ENCODE measurements at regions of chr3 and their contacts with region 1.

Region 1: DNA sequence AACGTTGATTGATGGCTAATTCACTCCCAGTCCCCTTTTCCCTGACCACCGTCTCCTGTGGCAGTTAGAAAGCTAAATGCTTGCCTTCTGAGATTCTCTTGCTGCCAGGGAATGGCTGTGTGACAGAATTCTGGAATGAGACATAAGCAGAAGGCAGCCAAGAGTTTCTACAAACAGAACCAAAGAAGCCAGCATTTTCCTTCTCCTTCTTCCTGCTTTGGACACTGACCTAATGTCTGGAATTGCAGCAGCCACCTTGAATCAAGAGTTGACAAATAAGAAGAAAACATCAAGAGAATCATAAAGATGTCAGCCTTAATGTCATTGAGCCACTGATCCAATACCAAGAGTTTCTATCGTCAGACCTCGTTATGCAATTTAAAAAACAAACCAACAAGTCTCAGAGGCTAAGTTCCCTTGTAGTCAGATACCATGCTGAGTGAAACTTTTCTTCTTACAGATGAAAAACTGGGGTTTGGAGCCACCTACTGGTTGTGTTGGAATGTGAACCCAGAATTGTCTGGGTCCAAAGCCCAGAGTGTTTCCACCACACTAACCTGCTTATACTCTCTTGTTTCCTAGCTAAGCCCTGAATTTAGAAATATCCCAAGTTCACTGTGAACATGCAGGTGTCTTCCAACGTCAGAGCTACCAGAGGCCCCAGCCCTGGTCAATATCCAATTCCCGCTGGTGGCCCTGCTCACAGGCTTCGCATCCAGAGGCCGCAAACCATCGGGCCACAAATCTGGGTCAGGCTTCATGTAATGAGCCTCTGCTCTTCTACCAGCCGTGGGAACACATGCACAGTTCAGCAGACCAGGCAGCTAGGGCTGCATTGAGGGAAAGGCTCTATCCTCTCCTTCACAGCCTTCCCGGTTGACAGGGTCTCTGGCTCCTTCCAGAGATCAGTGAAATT is 42.5 kb downstream of the MCF2L2 start:
- DNase-seq: peak; percentile 48
- ATAC-seq: peak; percentile 66
- H3K4me3 Mint-ChIP-seq: no peak overlapping the region
- H3K27ac Mint-ChIP-seq: peak overlapping the region; percentile 88; the same call in 1 of the 2 replicates
- H3K4me1 Mint-ChIP-seq: peaks cover 34% of the 10 kb centered on the region
- H3K27me3 Mint-ChIP-seq: no peaks in the 10 kb centered on the region
- CTCF ChIP-seq: peak; percentile 67

Region 2: GRCh38 chr3:183085634-183086390 is 300.1 kb before region 1 on chr3:
- CTCF ChIA-PET with region 1: interaction called, 10 read pairs
- POLR2A ChIA-PET with region 1: no interaction called
- DNase-seq: peak; percentile 73
- ATAC-seq: peak; percentile 93
- H3K4me3 Mint-ChIP-seq: no peak overlapping the region
- H3K27ac Mint-ChIP-seq: peak overlapping the region; percentile 90
- H3K4me1 Mint-ChIP-seq: 0 out of 2 replicates have a peak, but pooled peaks cover 8% of the 10 kb centered on the region
- H3K27me3 Mint-ChIP-seq: no peaks in the 10 kb centered on the region
- CTCF ChIP-seq: peak; percentile 70

Region 3: GRCh38 chr3:183122257-183122932 is 263.6 kb before region 1 on chr3:
- CTCF ChIA-PET with region 1: interaction called, 20 read pairs
- POLR2A ChIA-PET with region 1: no interaction called
- DNase-seq: no peak
- ATAC-seq: peak; percentile 44; the same call in 1 of the 2 replicates
- H3K4me3 Mint-ChIP-seq: no peak overlapping the region
- H3K27ac Mint-ChIP-seq: no peak overlapping the region
- H3K4me1 Mint-ChIP-seq: no peaks in the 10 kb centered on the region
- H3K27me3 Mint-ChIP-seq: peaks cover 13% of the 10 kb centered on the region
- CTCF ChIP-seq: peak; percentile 68

Region 4: GRCh38 chr3:183161552-183162336 is 224.2 kb before region 1 on chr3:
- CTCF ChIA-PET with region 1: interaction called, 12 read pairs
- POLR2A ChIA-PET with region 1: no interaction called
- DNase-seq: peak; percentile 72
- ATAC-seq: peak; percentile 66
- H3K4me3 Mint-ChIP-seq: peak overlapping the region; percentile 76
- H3K27ac Mint-ChIP-seq: no peak overlapping the region
- H3K4me1 Mint-ChIP-seq: peaks cover 10% of the 10 kb centered on the region
- H3K27me3 Mint-ChIP-seq: peaks cover 46% of the 10 kb centered on the region
- CTCF ChIP-seq: no peak

Region 5: GRCh38 chr3:183178629-183179549 is 207.1 kb before region 1 on chr3:
- CTCF ChIA-PET with region 1: interaction called, 12 read pairs
- POLR2A ChIA-PET with region 1: no interaction called
- DNase-seq: peak; percentile 76
- ATAC-seq: peak; percentile 71
- H3K4me3 Mint-ChIP-seq: peak overlapping the region; percentile 71
- H3K27ac Mint-ChIP-seq: no peak overlapping the region
- H3K4me1 Mint-ChIP-seq: peaks cover 9% of the 10 kb centered on the region
- H3K27me3 Mint-ChIP-seq: peaks cover 49% of the 10 kb centered on the region
- CTCF ChIP-seq: no peak

Region 6: GRCh38 chr3:183188895-183189462 is 197.0 kb before region 1 on chr3:
- CTCF ChIA-PET with region 1: interaction called, 115 read pairs
- POLR2A ChIA-PET with region 1: no interaction called
- DNase-seq: peak; percentile 77
- ATAC-seq: peak; percentile 93
- H3K4me3 Mint-ChIP-seq: no peak overlapping the region
- H3K27ac Mint-ChIP-seq: no peak overlapping the region
- H3K4me1 Mint-ChIP-seq: no peaks in the 10 kb centered on the region; the same call in 1 of the 2 replicates
- H3K27me3 Mint-ChIP-seq: no peaks in the 10 kb centered on the region
- CTCF ChIP-seq: no peak

Region 7: DNA sequence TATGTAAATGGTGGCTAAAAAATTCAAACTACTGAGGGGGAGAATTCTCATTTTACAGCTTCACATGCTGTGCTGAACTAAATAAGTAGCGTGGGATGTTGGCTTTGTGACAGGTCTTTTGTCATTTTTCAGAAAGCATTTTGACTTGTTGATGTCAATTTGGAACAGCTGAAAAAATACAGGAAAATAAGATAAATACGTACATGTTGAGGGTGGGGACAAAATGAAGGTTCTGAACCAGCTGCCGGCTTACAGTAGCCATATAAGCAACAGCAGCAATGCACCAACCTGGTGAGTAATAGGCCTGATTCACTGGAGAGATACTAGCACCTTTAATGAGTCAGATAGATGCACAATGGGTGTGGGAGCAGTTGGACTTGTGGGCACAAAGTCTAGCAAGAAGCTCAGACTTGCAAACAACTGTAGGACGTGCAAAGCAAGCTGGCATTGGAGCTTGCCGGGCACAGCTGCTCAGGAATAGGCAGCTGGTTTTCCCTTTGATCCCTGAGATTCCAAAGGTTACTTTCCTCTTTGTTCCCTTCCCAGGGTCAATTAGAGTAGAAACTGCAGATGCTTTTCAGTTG is 120.0 kb before region 1 on chr3:
- CTCF ChIA-PET with region 1: interaction called, 12 read pairs
- POLR2A ChIA-PET with region 1: no interaction called
- DNase-seq: no peak
- ATAC-seq: no peak
- H3K4me3 Mint-ChIP-seq: no peak overlapping the region
- H3K27ac Mint-ChIP-seq: no peak overlapping the region
- H3K4me1 Mint-ChIP-seq: peaks cover 26% of the 10 kb centered on the region
- H3K27me3 Mint-ChIP-seq: no peaks in the 10 kb centered on the region
- CTCF ChIP-seq: no peak

Region 8: DNA sequence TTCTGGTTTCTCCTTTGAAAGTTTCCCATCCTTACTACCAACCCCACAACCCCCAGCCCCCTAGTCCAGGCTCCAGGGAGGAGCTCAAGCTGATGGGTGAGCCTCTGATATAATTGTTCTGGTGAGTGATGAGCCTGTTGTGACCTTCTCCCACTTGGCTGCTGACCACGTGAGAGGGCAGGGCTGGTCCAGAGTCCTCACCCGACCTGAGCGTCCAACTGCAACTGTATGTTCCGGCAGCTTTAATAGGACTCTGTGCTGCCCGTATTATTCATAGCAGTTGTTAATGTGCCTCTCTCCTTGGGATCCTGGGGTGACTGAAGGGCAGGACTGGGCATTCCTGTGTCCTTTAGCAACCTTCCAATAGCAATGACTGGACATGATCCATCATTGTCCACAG is 76.7 kb before region 1 on chr3:
- CTCF ChIA-PET with region 1: no interaction called
- POLR2A ChIA-PET with region 1: no interaction called
- DNase-seq: no peak
- ATAC-seq: no peak
- H3K4me3 Mint-ChIP-seq: no peak overlapping the region
- H3K27ac Mint-ChIP-seq: no peak overlapping the region
- H3K4me1 Mint-ChIP-seq: no peaks in the 10 kb centered on the region
- H3K27me3 Mint-ChIP-seq: no peaks in the 10 kb centered on the region
- CTCF ChIP-seq: no peak

Region 9: DNA sequence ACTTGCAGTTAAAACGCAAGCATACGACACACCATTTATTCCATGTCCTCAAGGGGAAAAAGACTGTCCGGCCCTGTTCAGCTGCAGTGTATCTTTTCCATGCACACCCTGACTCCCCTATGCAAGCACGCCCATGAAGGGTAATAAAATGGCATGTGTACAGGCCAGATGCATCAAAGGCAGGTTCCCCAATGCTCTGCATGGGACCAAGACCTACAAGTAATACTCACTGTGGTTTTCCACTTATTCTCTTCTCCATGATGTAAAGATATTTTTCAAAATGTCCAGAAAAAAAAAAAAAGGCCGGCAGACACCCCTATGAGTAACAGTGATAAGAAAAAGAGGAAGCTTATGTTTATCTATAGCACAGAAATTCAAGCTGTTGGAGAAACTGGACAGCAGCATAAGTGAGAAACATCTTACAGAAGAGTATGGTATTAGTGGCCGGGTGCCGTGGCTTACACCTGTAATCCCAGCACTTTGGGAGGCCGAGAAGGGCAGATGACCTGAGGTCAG is 28.3 kb before region 1 on chr3:
- CTCF ChIA-PET with region 1: no interaction called
- POLR2A ChIA-PET with region 1: no interaction called
- DNase-seq: no peak
- ATAC-seq: no peak
- H3K4me3 Mint-ChIP-seq: no peak overlapping the region
- H3K27ac Mint-ChIP-seq: no peak overlapping the region
- H3K4me1 Mint-ChIP-seq: no peaks in the 10 kb centered on the region
- H3K27me3 Mint-ChIP-seq: no peaks in the 10 kb centered on the region
- CTCF ChIP-seq: no peak

Measured in WTC11 (cell line).